Activated CD4-positive, alpha-beta T cell treated with anti-CD3 and anti-CD28 coated beads, Interleukin-2, amount 10 ng/mL, durations not matched to agents 24 days and 14 days (primary cell): ENCODE measurements at regions of chrX and their contacts with region 1.

Region 1: DNA sequence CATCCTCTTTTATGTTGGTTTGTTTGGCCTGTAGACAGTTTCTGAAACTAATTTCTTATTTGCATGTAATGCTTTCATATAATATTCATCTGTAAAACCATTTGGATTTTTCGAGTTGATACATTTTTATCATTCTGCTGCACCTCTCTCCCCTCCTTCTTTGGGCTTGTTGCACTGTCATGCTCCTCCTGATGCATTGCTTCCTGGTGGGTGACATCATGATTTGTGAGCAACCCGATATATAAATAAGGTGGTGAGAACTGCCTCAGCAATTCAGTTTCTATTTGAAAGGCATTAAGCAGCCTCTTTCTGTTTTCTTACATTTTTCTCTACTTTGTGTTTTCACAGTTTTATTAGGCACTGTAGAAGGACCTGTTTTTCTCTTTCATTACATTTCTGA is 515.7 kb downstream of the RPA4 start:
- DNase-seq: peak; percentile 60
- H3K4me3 Mint-ChIP-seq: peak overlapping the region; percentile 57
- H3K27ac Mint-ChIP-seq: peak overlapping the region; percentile 94
- H3K4me1 Mint-ChIP-seq: peaks cover 40% of the 10 kb centered on the region
- H3K27me3 Mint-ChIP-seq: no peaks in the 10 kb centered on the region

Region 2: GRCh38 chrX:96684339-96685209 is 714.8 kb before region 1 on chrX and contains the start of gene DIAPH2:
- intact Hi-C with region 1: loop called (anchors 2 kb)
- DNase-seq: peak; percentile 93
- H3K4me3 Mint-ChIP-seq: peak within 1 kb of the TSS; percentile 96
- H3K27ac Mint-ChIP-seq: peak within 1 kb of the TSS; percentile 97
- H3K4me1 Mint-ChIP-seq: peaks cover 18% of the 10 kb centered on the region
- H3K27me3 Mint-ChIP-seq: no peaks in the 10 kb centered on the region
- total RNA-seq, gene DIAPH2: 12.7 and 13.2 TPM in 2 replicates

Region 3: DNA sequence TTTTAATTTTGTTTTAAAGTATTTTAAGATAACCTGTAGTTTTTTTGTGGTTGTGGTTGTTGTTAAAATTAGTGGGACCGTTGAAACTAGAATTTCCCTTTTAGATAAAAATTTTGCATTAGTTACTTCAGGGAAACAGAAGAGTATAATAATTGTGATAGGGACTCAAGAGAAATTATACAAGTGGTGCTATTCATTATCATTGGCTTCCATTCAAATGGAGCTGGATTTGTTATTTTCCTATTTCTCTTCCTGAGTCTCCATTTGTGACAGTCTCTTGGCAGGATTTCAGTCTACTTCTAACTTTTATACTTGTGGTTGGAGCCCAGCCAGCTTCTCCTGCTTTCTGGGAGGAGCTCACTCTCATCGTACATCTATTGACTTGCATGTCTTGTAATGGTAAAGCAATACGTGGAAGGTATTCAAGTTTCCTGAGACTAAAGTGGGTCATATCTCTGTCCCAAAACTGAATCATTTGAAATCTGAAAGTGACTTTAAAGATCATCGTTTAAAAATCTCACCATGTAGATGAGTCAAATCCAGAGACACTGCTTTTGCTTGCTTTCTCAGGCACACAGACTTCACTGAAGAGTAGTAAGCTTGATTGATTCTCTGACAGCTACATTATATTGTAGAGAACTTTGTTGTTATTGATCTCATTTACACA is 359.9 kb before region 1 on chrX:
- intact Hi-C with region 1: loop called (anchors 2 kb)
- DNase-seq: no peak
- H3K4me3 Mint-ChIP-seq: no peak overlapping the region
- H3K27ac Mint-ChIP-seq: peak overlapping the region; percentile 43
- H3K4me1 Mint-ChIP-seq: peaks cover 8% of the 10 kb centered on the region
- H3K27me3 Mint-ChIP-seq: no peaks in the 10 kb centered on the region

Region 4: GRCh38 chrX:97330151-97330550 is 69.2 kb before region 1 on chrX:
- intact Hi-C with region 1: loop called (anchors 10 kb)
- DNase-seq: no peak
- H3K4me3 Mint-ChIP-seq: no peak overlapping the region
- H3K27ac Mint-ChIP-seq: no peak overlapping the region
- H3K4me1 Mint-ChIP-seq: peaks cover 4% of the 10 kb centered on the region
- H3K27me3 Mint-ChIP-seq: no peaks in the 10 kb centered on the region

Region 5: DNA sequence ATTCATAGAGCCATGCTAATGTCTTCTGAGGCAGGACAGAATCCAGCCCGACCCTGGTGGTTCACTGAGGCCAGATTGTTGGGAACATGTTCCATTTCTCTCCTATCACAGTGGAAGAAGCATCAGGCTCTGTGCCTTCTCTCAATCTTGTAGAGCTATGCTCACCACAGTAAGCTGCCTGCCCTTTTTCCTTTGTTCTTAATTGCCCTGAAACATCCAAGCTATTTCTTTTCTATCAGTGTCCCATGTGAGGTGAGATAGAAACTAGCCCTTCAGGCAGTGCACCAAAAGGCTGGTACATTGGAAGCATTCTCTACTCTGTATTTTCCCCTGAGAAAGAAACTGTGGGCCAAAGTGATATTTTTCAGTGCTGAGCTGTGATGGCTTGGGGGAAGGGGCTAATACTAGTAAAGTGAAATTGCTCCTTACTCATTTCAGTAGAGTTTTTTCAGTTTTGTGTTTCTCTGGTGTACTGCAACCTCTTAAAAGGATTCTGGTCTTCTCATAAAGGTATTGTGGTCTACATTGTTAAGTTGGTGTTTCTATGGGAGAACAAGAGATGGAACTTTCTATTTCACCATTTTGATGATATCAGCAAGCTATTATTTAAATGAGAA is 95.5 kb after region 1 on chrX:
- intact Hi-C with region 1: loop called (anchors 2 kb)
- DNase-seq: no peak
- H3K4me3 Mint-ChIP-seq: no peak overlapping the region
- H3K27ac Mint-ChIP-seq: no peak overlapping the region
- H3K4me1 Mint-ChIP-seq: peaks cover 3% of the 10 kb centered on the region
- H3K27me3 Mint-ChIP-seq: no peaks in the 10 kb centered on the region

Region 6: GRCh38 chrX:97609938-97610337 is 210.5 kb after region 1 on chrX:
- intact Hi-C with region 1: no loop called
- DNase-seq: no peak
- H3K4me3 Mint-ChIP-seq: no peak overlapping the region
- H3K27ac Mint-ChIP-seq: no peak overlapping the region
- H3K4me1 Mint-ChIP-seq: no peaks in the 10 kb centered on the region
- H3K27me3 Mint-ChIP-seq: no peaks in the 10 kb centered on the region